Psoas muscle (tissue), 8 donors: ENCODE measurements at regions of chr4 and their contacts with region 1.

Region 1: DNA sequence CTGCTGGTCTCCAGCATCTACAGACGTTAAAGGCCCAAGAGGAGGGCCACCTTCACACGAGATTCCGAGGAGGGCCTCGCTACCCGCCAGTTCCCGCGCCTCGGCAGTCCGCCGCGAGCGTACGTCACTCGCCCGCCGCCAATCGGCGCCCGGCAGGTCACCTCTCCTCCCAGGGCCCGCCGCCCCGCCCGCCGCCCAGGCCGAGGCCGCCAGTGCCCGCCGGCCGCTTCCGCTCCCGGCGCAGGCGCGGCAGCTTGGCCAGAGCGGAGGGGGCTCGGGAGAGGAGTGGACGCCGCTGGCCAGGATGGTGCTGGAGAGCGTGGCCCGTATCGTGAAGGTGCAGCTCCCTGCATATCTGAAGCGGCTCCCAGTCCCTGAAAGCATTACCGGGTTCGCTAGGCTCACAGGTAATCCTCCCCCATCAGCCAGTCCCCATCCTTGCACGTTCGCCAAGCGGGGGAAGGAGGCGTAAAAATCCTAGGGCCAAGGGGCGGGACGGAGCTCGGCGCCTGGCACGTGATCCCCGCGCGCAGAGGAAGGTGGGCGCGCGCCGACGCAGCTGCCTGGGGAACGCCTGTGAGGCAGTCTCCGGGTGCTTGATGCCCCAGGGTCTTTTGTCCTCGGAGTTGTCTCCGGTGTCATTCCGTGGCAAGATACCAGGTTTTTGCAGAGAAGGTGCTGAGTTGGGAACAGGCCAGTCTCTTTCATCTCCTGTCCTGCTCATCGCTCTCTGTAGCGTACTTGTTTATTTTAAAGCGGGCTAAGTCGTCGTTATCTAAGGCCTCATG is at the start of gene CISD2:
- DNase-seq: peak; percentile 92 to 95
- ATAC-seq: peak; percentile 97 to 98 (median 98)
- H3K4me3 ChIP-seq: peak within 1 kb of the TSS; percentile 82
- H3K27ac ChIP-seq: peak within 1 kb of the TSS; percentile 91
- H3K4me1 ChIP-seq: peaks cover 20% of the 10 kb centered on the region
- H3K27me3 ChIP-seq: no peaks in the 10 kb centered on the region
- CTCF ChIP-seq: no peak
- total RNA-seq, gene CISD2: 6.2 to 13.0 (median 9.1) TPM

Region 2: DNA sequence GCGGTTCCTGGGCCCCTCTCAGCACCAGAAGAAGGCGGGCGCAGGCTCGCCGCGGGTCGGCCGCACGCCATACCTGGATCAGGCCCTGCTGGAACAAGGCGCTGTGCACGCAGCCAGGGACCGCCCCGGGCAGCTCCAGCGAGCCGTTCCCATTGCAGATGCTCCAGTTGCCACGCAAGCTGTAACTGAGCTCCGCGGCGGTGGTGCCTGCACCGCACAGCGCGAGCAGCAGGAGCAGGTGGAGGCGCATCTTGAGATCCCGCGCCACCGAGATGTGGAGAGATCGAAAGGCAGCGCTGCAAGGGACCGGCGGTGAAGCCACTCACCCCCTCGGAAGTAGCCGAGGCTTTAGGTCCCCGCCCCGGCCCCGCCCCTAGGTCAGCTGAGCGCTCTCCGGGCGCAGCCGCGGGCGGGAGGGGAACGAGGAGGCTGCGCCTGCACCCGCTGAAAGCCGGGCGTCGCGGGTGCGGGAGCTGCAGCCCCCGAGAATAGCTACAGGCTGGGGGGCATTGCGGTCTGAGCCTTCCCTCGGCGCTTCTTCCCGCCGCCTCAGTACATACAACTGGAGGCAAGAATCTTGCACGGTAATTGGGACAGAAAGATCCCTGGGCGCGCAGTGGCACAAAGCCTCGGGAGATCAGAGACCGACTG is 108.2 kb before region 1 on chr4 and contains the start of gene MANBA:
- intact Hi-C with region 1: loop called in 1 of 2 experiments (anchors 5 kb)
- DNase-seq: peak; percentile 85 to 91
- ATAC-seq: peak; percentile 93 to 98 (median 96)
- H3K4me3 ChIP-seq: peak within 1 kb of the TSS; percentile 87
- H3K27ac ChIP-seq: peak within 1 kb of the TSS; percentile 81
- H3K4me1 ChIP-seq: peaks cover 4% of the 10 kb centered on the region
- H3K27me3 ChIP-seq: no peaks in the 10 kb centered on the region
- CTCF ChIP-seq: no peak
- total RNA-seq, gene MANBA: 3.5 to 11.9 (median 8.2) TPM

Region 3: DNA sequence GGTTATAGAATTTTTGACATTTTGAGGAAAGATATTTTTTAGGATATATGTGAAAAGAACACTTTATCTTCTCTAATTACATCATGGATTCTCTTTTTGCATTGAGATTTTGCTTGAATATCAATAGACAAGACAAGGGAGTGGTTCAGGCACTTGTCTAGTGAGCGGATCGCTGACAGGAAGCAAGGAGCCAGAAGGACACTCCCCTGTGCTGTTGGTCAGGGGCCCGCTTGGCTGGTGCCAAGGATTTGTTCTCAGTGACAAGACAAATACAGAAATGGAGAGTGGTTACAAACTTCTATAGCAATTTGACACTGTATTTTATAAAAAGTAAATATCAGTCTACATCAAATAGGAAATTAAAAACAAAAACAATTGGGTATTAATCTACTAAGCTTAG is 90.5 kb after region 1 on chr4:
- intact Hi-C with region 1: no loop called
- DNase-seq: no peak
- ATAC-seq: no peak
- H3K4me3 ChIP-seq: no peak overlapping the region
- H3K27ac ChIP-seq: no peak overlapping the region
- H3K4me1 ChIP-seq: no peaks in the 10 kb centered on the region
- H3K27me3 ChIP-seq: no peaks in the 10 kb centered on the region
- CTCF ChIP-seq: no peak

Region 4: DNA sequence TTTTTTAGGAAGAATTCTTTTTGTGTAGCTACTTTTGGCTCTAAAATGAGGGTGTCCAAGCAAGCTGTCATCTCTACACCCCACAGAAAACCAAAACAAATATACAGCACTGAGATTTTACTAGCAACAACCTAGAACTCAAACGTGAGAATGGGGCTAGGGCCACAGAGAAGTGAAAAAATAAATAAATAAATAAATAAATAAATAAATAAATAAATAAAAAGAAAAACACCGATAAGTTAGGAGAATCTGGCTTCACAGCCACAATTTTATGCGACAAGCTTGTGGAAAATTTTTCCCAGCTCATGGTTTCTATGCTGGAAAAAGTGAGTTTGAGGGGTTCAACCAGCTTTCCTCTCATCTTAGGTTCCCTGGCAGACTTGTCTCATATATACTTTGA is 1175.4 kb after region 1 on chr4:
- intact Hi-C with region 1: no loop called
- DNase-seq: no peak
- ATAC-seq: no peak
- H3K4me3 ChIP-seq: no peak overlapping the region
- H3K27ac ChIP-seq: no peak overlapping the region
- H3K4me1 ChIP-seq: no peaks in the 10 kb centered on the region
- H3K27me3 ChIP-seq: no peaks in the 10 kb centered on the region
- CTCF ChIP-seq: no peak